ENCODE measurements at regions of chr1 and their contacts with region 1.

Region 1: DNA sequence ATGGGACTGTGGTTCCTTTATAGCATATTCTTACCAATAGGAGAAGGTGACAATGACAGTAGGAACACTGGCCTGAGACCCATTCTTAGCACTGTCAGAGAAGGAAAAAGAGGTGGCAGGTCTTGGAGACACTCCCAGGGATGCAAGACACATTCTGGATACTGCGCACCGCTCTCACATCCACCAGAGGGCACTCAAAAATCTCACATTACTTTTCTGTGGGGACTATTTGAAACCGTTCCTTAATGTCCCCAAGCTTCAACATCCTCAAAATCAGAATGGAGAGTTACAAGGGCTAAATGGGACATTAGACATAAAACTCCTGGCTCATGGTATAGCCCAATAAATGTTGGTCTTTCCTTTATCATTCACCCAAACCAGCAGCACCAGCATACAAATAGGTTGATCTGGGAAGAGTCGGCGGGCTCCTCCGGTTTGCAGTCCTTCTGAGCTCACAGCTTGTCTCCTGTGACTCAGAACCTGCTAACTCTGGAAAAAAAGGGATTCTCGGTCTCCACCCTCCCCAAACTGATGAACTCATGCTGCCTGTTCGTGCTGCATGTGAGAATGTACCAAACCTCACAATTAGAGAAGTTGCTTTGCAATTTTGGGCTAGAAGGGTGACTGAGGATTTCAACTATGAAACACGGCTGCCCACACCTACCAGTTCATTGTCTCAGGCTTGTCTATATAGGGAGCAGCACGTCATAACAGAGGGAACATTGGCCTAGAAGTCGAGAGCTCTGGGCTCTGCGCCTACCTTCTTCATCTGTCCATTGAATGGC is 40.2 kb downstream of the IL12RB2 start:
- DNase-seq: no peak
- ATAC-seq: peak; percentile 85
- H3K4me3 ChIP-seq: no peak overlapping the region
- H3K27ac ChIP-seq: no peak overlapping the region
- H3K4me1 ChIP-seq: peaks cover 7% of the 10 kb centered on the region
- H3K27me3 ChIP-seq: no peaks in the 10 kb centered on the region
- CTCF ChIP-seq: peak; percentile 62 to 70 (median 68)
- EP300 ChIP-seq: no peak
- POLR2A ChIP-seq: no peak
- RAD21 ChIP-seq: peak; percentile 71

Region 2: GRCh38 chr1:67332653-67333529 is 15.0 kb before region 1 on chr1:
- CTCF ChIA-PET with region 1: interaction called, 31 read pairs
- POLR2A ChIA-PET with region 1: interaction called, 6 read pairs
- RAD21 ChIA-PET with region 1: interaction called, 13 read pairs
- SMC1A ChIA-PET with region 1: interaction called, 43 read pairs
- in situ Hi-C with region 1: no loop called
- intact Hi-C with region 1: no loop called
- DNase-seq: peak; percentile 91
- ATAC-seq: peak; percentile 97
- H3K4me3 ChIP-seq: no peak overlapping the region; the same call in 1 of the 2 replicates
- H3K27ac ChIP-seq: peak overlapping the region; percentile 83
- H3K4me1 ChIP-seq: peaks cover 51% of the 10 kb centered on the region
- H3K27me3 ChIP-seq: peaks cover 0 to 2% of the 10 kb centered on the region in 2 experiments; a peak in 1 of 4 replicates
- CTCF ChIP-seq: no peak
- EP300 ChIP-seq: peak; percentile 99
- POLR2A ChIP-seq: no peak
- RAD21 ChIP-seq: peak; percentile 17; the same call in 1 of the 2 replicates

Region 3: DNA sequence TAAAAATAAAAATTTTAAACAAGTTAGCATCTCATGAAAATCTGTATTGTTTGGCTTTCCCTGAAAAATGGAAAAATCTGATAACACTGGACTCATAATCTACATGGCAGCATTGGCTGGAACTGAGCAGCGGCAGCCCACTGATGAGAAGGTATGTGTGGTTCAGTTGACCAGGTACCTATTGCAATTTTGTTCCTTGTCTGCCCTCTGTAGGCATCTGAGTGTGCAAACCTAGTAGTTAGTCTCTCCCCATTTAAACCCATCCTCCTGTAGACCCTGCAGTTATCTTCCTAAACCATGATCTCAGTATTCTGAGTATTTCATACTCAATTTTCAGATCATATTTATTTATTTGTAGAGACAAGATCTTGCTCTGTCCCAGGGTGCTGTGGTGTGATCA is 141.8 kb after region 1 on chr1:
- CTCF ChIA-PET with region 1: interaction called, 87 read pairs
- POLR2A ChIA-PET with region 1: no interaction called
- RAD21 ChIA-PET with region 1: interaction called, 9 read pairs
- SMC1A ChIA-PET with region 1: interaction called, 4 read pairs
- in situ Hi-C with region 1: no loop called
- intact Hi-C with region 1: no loop called
- DNase-seq: peak; percentile 0
- ATAC-seq: peak; percentile 81
- H3K4me3 ChIP-seq: no peak overlapping the region
- H3K27ac ChIP-seq: no peak overlapping the region
- H3K4me1 ChIP-seq: no peaks in the 10 kb centered on the region
- H3K27me3 ChIP-seq: no peaks in the 10 kb centered on the region
- CTCF ChIP-seq: peak; percentile 36 to 51 (median 36); a peak in 4 of 6 replicates
- EP300 ChIP-seq: no peak
- POLR2A ChIP-seq: no peak
- RAD21 ChIP-seq: peak; percentile 58

Region 4: GRCh38 chr1:67700692-67701410 is 353.0 kb after region 1 on chr1:
- CTCF ChIA-PET with region 1: no interaction called
- POLR2A ChIA-PET with region 1: no interaction called
- RAD21 ChIA-PET with region 1: no interaction called
- SMC1A ChIA-PET with region 1: no interaction called
- in situ Hi-C with region 1: no loop called
- intact Hi-C with region 1: no loop called
- DNase-seq: no peak
- ATAC-seq: peak; percentile 79
- H3K4me3 ChIP-seq: no peak overlapping the region
- H3K27ac ChIP-seq: no peak overlapping the region
- H3K4me1 ChIP-seq: no peaks in the 10 kb centered on the region
- H3K27me3 ChIP-seq: no peaks in the 10 kb centered on the region; a peak in 2 of 4 replicates
- CTCF ChIP-seq: no peak
- EP300 ChIP-seq: no peak
- POLR2A ChIP-seq: no peak
- RAD21 ChIP-seq: no peak